ENCODE measurements at regions of chr9 and their contacts with region 1.

Region 1: DNA sequence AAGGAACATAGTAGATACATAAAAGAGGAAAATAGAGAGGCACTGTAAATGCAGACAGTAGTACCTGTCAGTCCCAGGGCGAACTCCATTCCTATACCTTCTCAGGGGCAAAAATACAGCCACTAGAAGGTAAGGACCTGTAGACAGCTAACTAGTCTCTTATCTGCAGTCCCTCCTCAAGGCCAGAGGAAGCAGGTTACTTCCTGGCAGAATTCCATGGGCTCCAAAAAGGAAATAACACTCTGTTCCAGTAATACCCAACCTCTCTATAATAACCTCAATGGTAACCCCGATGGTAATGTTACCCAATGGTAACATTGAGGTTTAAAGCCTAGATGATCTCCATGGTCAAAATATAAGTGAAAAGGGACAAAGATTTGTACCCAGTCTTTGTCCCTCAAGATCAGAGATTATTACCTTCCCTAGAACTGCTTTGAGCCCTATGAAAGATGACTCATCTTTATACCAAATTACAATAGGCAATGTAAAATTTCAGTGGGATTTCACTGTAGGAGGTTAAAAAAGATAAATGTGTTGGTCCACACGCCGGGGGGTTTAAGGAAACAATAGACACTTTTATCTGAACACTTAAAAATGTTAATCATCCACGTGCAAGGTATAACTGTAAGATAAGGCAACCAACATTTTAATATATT is 113.0 kb downstream of the DENND1A start:
- DNase-seq: no peak
- ATAC-seq: no peak
- H3K4me3 ChIP-seq: no peak overlapping the region
- H3K27ac ChIP-seq: no peak overlapping the region
- H3K4me1 ChIP-seq: no peaks in the 10 kb centered on the region
- H3K27me3 ChIP-seq: no peaks in the 10 kb centered on the region
- CTCF ChIP-seq: no peak
- EP300 ChIP-seq: no peak
- POLR2A ChIP-seq: no peak
- RAD21 ChIP-seq: no peak

Region 2: DNA sequence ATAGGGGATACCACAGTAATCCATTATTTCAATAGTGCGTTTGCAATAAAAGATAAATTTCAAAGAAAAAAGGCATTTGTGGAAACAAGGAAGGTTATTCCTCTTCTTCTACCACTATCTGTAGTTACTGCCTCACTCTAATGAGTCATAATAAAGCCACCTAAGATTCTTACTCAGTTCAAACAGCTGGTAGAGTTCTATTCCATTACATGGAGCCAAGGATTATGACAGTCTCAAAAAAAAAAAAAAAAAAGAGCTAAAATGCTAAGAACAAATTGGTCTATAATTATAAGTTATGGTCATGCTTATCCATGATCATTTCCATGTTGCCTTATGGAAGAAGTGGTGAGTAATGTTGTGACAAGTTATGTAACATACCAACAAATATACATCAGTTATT is 66.7 kb after region 1 on chr9:
- CTCF ChIA-PET with region 1: no interaction called
- POLR2A ChIA-PET with region 1: interaction called, 10 read pairs
- RAD21 ChIA-PET with region 1: no interaction called
- SMC1A ChIA-PET with region 1: no interaction called
- in situ Hi-C with region 1: no loop called
- intact Hi-C with region 1: no loop called
- DNase-seq: no peak
- ATAC-seq: no peak
- H3K4me3 ChIP-seq: no peak overlapping the region
- H3K27ac ChIP-seq: no peak overlapping the region
- H3K4me1 ChIP-seq: peaks cover 6% of the 10 kb centered on the region
- H3K27me3 ChIP-seq: no peaks in the 10 kb centered on the region
- CTCF ChIP-seq: no peak
- EP300 ChIP-seq: no peak
- POLR2A ChIP-seq: no peak
- RAD21 ChIP-seq: no peak

Region 3: DNA sequence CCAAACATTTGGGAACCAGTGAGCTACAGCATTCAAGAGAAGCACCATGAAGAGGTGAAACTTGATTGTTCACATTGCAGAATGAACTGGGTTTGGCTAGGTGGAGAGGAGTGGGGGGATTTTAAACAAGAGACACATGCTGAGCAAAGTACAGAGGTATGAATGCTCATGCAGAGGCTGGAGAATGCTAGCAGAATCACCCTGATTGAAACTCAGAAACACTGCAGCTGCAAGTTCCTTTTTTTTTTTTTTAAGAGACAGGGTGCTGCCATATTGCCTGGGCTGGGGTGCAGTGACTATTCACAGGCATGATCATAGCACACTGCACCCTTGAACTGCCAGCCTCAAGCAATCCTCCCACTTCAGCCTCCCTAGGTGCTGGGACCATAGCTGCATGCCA is 77.9 kb after region 1 on chr9:
- CTCF ChIA-PET with region 1: no interaction called
- POLR2A ChIA-PET with region 1: no interaction called
- RAD21 ChIA-PET with region 1: no interaction called
- SMC1A ChIA-PET with region 1: no interaction called
- in situ Hi-C with region 1: no loop called
- intact Hi-C with region 1: no loop called
- DNase-seq: no peak
- ATAC-seq: peak; percentile 69
- H3K4me3 ChIP-seq: no peak overlapping the region
- H3K27ac ChIP-seq: no peak overlapping the region
- H3K4me1 ChIP-seq: peaks cover 45% of the 10 kb centered on the region
- H3K27me3 ChIP-seq: no peaks in the 10 kb centered on the region
- CTCF ChIP-seq: no peak
- EP300 ChIP-seq: no peak
- POLR2A ChIP-seq: no peak
- RAD21 ChIP-seq: no peak